Dorsolateral prefrontal cortex (tissue), 120 donors: ENCODE measurements at regions of chr3 and their contacts with region 1.

Region 1: GRCh38 chr3:32296256-32297204 is 58.0 kb downstream of the CMTM8 start:
- DNase-seq: peak; percentile 21 to 75 (median 57)
- H3K4me3 ChIP-seq: no peak overlapping the region
- H3K27ac ChIP-seq: peak overlapping the region in 1 of 59 donors; percentile 45
- H3K27me3 ChIP-seq: no peaks in the 10 kb centered on the region
- CTCF ChIP-seq: peak; percentile 68 to 94 (median 87)

Region 2: GRCh38 chr3:32334675-32335074 is 38.1 kb after region 1 on chr3:
- intact Hi-C with region 1: loop called in 1 of 2 experiments (anchors 5 kb)
- DNase-seq: no peak
- H3K4me3 ChIP-seq: no peak overlapping the region
- H3K27ac ChIP-seq: no peak overlapping the region
- H3K27me3 ChIP-seq: no peaks in the 10 kb centered on the region
- CTCF ChIP-seq: peak in 2 of 56 donors; percentile 9 to 10

Region 3: GRCh38 chr3:32399030-32399620 is 102.6 kb after region 1 on chr3:
- intact Hi-C with region 1: loop called in 1 of 2 experiments (anchors 2 kb)
- DNase-seq: no peak
- H3K4me3 ChIP-seq: no peak overlapping the region
- H3K27ac ChIP-seq: peak overlapping the region in 7 of 59 donors; percentile 9 to 57 (median 23)
- H3K27me3 ChIP-seq: no peaks in the 10 kb centered on the region
- CTCF ChIP-seq: peak; percentile 44 to 78 (median 62)

Region 4: GRCh38 chr3:32467333-32468070 is 171.0 kb after region 1 on chr3:
- intact Hi-C with region 1: loop called (anchors 5 to 10 kb)
- DNase-seq: peak in 8 of 10 donors; percentile 44 to 86 (median 58)
- H3K4me3 ChIP-seq: peak overlapping the region; percentile 26 to 80 (median 60)
- H3K27ac ChIP-seq: peak overlapping the region in 3 of 59 donors; percentile 3 to 44 (median 42)
- H3K27me3 ChIP-seq: no peaks in the 10 kb centered on the region
- CTCF ChIP-seq: peak; percentile 79 to 100 (median 97)

Region 5: DNA sequence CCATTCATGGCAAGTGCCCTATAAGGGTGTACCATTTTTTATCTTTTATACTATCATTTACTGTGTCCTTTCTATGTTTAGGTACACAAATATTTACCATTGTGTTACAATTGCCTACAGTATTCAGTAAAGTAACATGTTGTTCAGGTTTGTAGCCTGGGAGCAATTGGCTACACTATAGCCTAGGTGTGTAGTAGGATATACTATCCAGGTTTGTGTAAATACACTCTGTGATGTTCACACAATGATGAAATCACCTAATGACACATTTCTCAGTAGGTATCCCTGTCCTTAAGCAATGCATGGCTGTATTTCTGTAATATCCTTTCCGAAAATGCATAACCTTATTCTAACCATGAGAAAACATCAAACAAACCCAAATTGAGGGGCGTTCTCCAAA is 370.6 kb after region 1 on chr3:
- intact Hi-C with region 1: loop called in 1 of 2 experiments (anchors 10 kb)
- DNase-seq: no peak
- H3K4me3 ChIP-seq: no peak overlapping the region
- H3K27ac ChIP-seq: no peak overlapping the region
- H3K27me3 ChIP-seq: peaks cover 0 to 6% (median 0%) of the 10 kb centered on the region in 45 donors
- CTCF ChIP-seq: no peak